Spleen (tissue), 13 donors: ENCODE measurements at regions of chr4 and their contacts with region 1.

Region 1: GRCh38 chr4:183504064-183504929 is 561 bp upstream of the ING2 start:
- DNase-seq: peak; percentile 100
- H3K4me3 ChIP-seq: peak overlapping the region; percentile 82 to 99 (median 94)
- H3K27ac ChIP-seq: peak overlapping the region; percentile 94 to 99 (median 98)
- H3K4me1 ChIP-seq: peaks cover 0 to 61% (median 26%) of the 10 kb centered on the region in 6 donors
- H3K27me3 ChIP-seq: no peaks in the 10 kb centered on the region
- CTCF ChIP-seq: peak in 8 of 11 experiments; percentile 6 to 61 (median 34)
- POLR2A ChIP-seq: peak in 1 of 3 donors; percentile 65

Region 2: DNA sequence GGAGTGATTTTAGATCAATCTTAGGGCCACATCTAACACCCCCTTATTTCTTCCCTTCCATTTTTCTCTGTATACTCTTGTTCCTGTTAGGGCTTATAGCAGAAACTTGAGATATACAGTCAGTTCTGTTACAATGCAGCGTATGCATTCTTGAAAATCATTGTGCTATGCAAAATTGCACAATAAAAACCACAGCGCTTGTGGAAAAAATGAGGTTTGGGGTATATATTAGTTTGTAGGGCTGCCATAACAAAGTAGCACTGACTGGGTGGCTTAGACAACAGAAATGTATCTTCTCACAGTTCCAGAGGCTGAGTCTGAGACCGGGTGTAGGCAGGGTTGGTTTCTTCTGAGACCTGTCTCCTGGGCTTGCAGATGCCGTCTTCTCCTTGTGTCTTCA is 346.2 kb before region 1 on chr4:
- intact Hi-C with region 1: no loop called
- DNase-seq: no peak
- H3K4me3 ChIP-seq: no peak overlapping the region
- H3K27ac ChIP-seq: no peak overlapping the region
- H3K4me1 ChIP-seq: peaks cover 0 to 5% (median 0%) of the 10 kb centered on the region in 6 donors
- H3K27me3 ChIP-seq: no peaks in the 10 kb centered on the region
- CTCF ChIP-seq: no peak
- POLR2A ChIP-seq: no peak

Region 3: DNA sequence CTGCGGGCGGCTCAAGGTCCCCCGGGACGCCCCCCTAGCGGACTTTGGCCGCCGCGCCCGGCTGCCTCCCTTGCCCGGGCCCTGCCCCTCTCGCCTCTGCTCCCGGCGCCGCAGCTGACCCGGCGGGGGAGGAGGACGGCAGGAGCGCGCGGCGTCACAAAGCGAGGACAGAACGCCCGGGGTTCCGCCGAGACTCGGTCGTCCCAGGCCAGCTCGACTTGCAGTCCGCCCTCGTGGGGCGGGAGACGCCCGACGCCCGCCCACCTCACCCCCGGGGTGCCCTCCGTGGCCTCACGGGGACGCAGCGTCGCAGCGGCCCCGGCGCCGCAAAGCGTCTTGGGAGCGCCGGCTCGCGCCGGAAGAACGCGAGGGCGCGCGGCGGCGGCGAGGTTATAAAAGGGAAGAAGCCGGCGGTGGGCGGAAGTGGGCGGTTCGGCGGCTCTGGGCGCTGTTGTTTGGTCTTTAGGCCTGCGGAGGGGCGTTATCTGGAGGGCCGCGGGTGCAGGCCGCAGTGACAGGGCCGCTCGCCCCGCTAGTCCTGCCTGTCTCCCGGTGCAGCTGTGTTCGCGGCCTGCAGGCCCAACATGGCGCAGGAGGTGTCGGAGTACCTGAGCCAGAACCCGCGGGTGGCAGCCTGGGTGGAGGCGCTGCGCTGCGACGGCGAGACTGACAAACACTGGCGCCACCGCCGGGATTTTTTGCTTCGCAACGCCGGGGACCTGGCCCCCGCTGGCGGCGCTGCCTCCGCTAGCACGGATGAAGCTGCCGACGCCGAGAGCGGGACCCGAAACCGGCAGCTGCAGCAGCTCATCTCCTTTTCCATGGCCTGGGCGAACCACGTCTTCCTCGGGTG is 59.9 kb before region 1 on chr4 and contains the start of gene CDKN2AIP:
- intact Hi-C with region 1: loop called (anchors 10 kb)
- DNase-seq: peak; percentile 99
- H3K4me3 ChIP-seq: peak within 1 kb of the TSS; percentile 76 to 99 (median 89)
- H3K27ac ChIP-seq: peak within 1 kb of the TSS; percentile 93 to 99 (median 96)
- H3K4me1 ChIP-seq: peaks cover 35 to 59% (median 53%) of the 10 kb centered on the region in 6 donors
- H3K27me3 ChIP-seq: no peaks in the 10 kb centered on the region
- CTCF ChIP-seq: peak in 10 of 11 experiments; percentile 3 to 55 (median 32)
- POLR2A ChIP-seq: peak; percentile 67 to 96 (median 91)
- total RNA-seq, gene CDKN2AIP: 11.6 to 27.9 (median 19.5) TPM

Region 4: DNA sequence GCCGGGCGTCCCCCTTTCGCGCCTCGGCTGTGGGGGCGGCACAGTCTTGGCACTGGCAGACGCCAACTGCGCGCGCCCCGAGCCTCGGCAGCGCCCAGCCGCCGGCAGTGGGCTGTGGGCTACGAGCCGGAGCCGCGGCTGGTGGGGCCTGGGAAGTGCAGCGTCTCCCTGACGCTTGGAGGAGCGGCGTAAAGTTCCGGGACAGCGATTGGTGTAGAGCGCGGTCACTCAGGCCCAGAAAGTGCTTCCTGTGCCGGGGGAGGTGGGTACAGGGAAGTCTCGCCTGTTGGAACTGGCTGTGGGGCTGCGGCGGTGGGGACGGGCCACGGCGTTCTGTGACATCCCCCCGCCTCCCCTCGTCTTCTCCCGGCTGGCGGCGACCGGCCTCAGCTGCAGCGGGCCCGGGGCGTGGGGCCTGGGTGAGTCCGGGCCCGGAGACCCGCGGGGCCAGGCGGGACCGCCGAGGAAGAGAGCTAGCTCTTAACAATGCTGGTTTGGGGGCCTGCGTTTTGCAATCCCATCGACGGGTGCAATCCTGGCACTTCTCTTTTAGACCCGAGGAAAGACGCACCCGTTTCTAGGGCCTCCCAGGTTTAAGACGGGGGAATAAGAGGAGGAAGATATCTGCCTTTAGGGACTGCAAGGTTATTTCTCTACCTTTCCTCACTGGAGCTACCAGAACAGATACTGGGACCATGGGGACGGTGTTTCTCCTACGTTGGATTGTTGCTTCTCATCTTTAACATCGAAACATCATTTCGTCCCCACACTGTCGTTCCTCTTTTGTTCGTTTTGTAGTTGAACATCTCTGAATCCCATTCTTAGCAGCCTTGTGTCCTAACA is 155.0 kb after region 1 on chr4 and contains the starts of genes RWDD4 and TRAPPC11:
- intact Hi-C with region 1: loop called (anchors 10 kb)
- DNase-seq: peak; percentile 99
- H3K4me3 ChIP-seq: peak within 1 kb of the TSS; percentile 61 to 91 (median 74)
- H3K27ac ChIP-seq: peak within 1 kb of the TSS; percentile 92 to 97 (median 96)
- H3K4me1 ChIP-seq: peaks cover 26 to 59% (median 33%) of the 10 kb centered on the region in 6 donors
- H3K27me3 ChIP-seq: no peaks in the 10 kb centered on the region
- CTCF ChIP-seq: peak in 10 of 11 experiments; percentile 35 to 89 (median 62)
- POLR2A ChIP-seq: peak; percentile 42 to 90 (median 65)
- total RNA-seq, gene RWDD4: 8.9 to 16.9 (median 14.2) TPM
- total RNA-seq, gene TRAPPC11: 33.8 to 72.2 (median 47.1) TPM